Activated CD8-positive, alpha-beta T cell treated with anti-CD3 and anti-CD28 coated beads, Interleukin-2, amount 10 ng/mL, durations not matched to agents 7 days and 5 days (primary cell): ENCODE measurements at regions of chr4 and their contacts with region 1.

Region 1: DNA sequence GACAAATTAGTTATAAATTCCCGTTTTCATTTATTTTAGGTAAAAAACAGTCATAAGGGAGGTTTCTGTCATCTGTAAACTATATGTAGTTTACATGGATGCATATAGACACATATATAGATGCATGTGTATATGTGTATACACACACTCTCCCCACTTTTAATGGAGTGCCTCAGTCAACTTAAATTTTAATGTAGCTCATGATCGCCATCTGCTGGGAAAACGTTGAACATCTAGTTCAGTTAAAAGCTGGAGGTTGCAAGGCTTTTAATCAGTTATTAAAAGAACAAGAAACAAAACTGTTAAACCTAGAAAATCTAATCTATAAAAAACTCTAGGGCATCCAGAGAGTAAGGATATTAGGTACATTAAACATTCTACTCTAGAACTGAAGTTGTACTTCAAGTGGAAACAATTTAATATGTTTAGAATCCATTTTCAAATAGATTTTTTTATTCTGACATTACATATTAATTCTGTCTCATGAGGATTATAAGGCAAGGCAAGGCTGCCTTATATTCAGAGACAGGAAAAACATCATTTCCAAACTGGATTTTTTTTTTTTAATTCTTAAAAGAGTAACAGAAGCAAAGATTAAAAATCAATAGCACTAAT is 122.6 kb downstream of the SHISA3 start:
- DNase-seq: peak; percentile 66
- ATAC-seq: peak; percentile 47
- H3K4me3 Mint-ChIP-seq: no peak overlapping the region
- H3K27ac Mint-ChIP-seq: no peak overlapping the region
- H3K4me1 Mint-ChIP-seq: peaks cover 5% of the 10 kb centered on the region
- H3K27me3 Mint-ChIP-seq: no peaks in the 10 kb centered on the region

Region 2: DNA sequence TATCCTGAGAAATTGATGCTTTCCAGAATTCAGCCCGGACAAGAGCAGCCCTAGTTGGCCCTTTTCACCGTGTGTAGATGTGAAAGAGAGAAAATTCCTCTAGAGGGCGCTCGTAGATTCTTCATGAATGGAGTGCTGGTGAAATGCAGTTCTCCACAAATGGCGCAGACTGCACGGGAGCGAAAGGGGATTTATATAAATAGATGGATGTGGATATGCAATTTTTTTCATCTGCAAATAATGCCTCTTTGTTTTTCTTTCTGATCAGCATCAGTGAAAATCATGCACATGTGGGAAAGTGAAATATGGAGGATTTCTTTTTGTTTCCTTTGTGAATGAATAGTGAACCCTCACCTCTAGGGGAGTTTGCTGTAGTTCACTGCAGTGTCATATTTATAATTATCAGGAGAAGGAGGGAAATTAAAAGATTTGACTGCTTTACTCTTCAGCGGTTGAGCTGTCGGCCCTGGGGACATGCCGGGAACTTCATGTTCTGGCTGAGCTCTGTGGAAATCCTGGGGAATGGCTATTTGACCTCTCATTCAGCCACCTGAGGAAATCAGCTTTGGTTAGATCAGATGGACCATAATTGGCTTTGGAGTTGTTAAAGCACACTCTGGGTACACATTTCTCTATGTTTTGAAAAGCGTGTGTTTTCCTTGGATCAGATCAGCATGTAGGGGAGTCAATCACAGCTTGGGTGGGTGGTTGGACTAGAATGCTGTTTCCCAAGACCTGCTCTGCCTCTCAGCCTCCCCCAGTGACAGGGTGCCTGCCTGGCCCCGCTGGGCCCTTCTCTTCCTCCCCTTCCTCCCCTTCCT is 237.6 kb before region 1 on chr4:
- CTCF ChIA-PET with region 1: interaction called, 10 read pairs
- POLR2A ChIA-PET with region 1: no interaction called
- DNase-seq: peak; percentile 59
- ATAC-seq: peak; percentile 82
- H3K4me3 Mint-ChIP-seq: no peak overlapping the region
- H3K27ac Mint-ChIP-seq: no peak overlapping the region
- H3K4me1 Mint-ChIP-seq: peaks cover 7% of the 10 kb centered on the region
- H3K27me3 Mint-ChIP-seq: peaks cover 3% of the 10 kb centered on the region

Region 3: GRCh38 chr4:42371306-42372252 is 148.3 kb before region 1 on chr4:
- CTCF ChIA-PET with region 1: interaction called, 45 read pairs
- POLR2A ChIA-PET with region 1: no interaction called
- DNase-seq: peak; percentile 32
- ATAC-seq: peak; percentile 55
- H3K4me3 Mint-ChIP-seq: no peak overlapping the region
- H3K27ac Mint-ChIP-seq: no peak overlapping the region
- H3K4me1 Mint-ChIP-seq: no peaks in the 10 kb centered on the region
- H3K27me3 Mint-ChIP-seq: peaks cover 7% of the 10 kb centered on the region

Region 4: DNA sequence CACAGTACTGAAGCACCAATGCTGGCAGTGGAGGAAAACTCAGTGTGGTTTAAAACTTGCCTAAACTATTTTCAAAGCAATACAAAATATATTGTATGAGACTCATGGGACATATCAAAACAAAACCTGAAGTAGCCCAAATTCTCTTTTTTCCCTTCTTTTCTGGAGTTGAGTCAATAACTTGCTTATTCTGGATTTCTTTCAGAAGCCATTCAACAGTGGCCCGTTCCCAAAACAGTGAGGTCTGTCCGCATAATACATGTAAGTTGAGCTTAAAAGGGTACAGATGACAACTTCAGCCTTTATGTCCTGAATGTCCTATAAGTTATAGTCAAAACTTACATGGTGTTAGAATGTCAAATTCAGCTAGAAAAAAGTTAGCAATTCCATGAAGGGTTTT is 21.9 kb before region 1 on chr4:
- CTCF ChIA-PET with region 1: interaction called, 12 read pairs
- POLR2A ChIA-PET with region 1: no interaction called
- DNase-seq: no peak
- ATAC-seq: no peak
- H3K4me3 Mint-ChIP-seq: no peak overlapping the region
- H3K27ac Mint-ChIP-seq: no peak overlapping the region
- H3K4me1 Mint-ChIP-seq: no peaks in the 10 kb centered on the region
- H3K27me3 Mint-ChIP-seq: no peaks in the 10 kb centered on the region